Naive thymus-derived CD4-positive, alpha-beta T cell (primary cell): ENCODE measurements at regions of chr15 and their contacts with region 1.

Region 1: GRCh38 chr15:44663409-44664308 is at the start of gene SPG11:
- DNase-seq: peak; percentile 81 to 95 (median 94)
- ATAC-seq: peak; percentile 91
- H3K4me3 ChIP-seq: peak within 1 kb of the TSS; percentile 85
- H3K4me3 Mint-ChIP-seq: peak within 1 kb of the TSS; percentile 84 to 99 (median 98)
- H3K27ac ChIP-seq: peak within 1 kb of the TSS; percentile 91
- H3K27ac Mint-ChIP-seq: peak within 1 kb of the TSS; percentile 94 to 99 (median 96)
- H3K4me1 ChIP-seq: peaks cover 35 to 53% of the 10 kb centered on the region in 2 donors
- H3K4me1 Mint-ChIP-seq: peaks cover 41 to 77% (median 69%) of the 10 kb centered on the region in 7 donors
- H3K27me3 ChIP-seq: no peaks in the 10 kb centered on the region
- H3K27me3 Mint-ChIP-seq: no peaks in the 10 kb centered on the region
- total RNA-seq, gene SPG11: 92.2 to 137 (median 131) TPM

Region 2: DNA sequence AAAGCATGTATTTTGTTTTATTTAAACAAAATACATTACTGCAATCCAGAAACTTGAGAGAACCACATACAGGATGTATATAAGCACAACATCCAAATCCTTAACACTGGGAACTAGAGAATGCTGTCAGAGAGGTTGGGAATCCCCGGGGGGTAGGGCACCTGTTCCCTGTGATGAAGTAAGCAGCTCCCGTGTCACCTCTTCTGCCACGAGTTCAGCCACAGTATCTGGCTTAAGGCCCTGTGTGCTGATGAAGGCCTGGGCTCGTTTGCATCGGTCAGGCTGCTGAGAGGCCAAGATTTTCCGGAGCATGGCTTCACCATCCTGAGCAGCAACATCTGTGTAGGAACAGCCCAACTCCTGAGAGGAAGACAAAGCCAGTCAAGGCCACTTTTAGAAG is 90.3 kb before region 1 on chr15:
- CTCF ChIA-PET with region 1: interaction called, 5 read pairs
- POLR2A ChIA-PET with region 1: interaction called, 3 read pairs
- intact Hi-C with region 1: loop called (anchors 1 to 2 kb)
- DNase-seq: no peak
- ATAC-seq: no peak
- H3K4me3 ChIP-seq: no peak overlapping the region
- H3K4me3 Mint-ChIP-seq: no peak overlapping the region
- H3K27ac ChIP-seq: peak overlapping the region; percentile 29
- H3K27ac Mint-ChIP-seq: peak overlapping the region in 4 of 9 donors; percentile 14 to 62 (median 33)
- H3K4me1 ChIP-seq: peaks cover 0 to 2% of the 10 kb centered on the region in 2 donors
- H3K4me1 Mint-ChIP-seq: peaks cover 4 to 11% (median 9%) of the 10 kb centered on the region in 7 donors
- H3K27me3 ChIP-seq: no peaks in the 10 kb centered on the region
- H3K27me3 Mint-ChIP-seq: no peaks in the 10 kb centered on the region

Region 3: DNA sequence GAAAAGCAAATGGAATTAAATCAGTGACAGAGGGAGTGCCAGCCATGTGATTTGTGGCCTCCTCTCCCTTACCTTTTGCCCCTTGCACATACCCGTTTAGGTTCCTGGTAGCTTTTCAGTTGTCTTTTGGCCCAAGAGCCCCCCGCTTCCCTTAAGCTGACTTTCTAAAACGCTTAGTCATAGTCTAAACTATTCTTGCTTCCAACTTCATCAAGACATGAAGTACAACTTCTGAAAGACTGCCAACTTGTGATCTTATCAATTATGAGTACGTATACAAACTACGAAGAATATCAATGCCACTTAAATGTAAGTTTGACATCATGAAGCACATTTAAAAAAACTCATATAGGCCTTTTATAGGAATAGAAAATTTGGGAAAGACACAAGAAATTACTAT is 64.8 kb before region 1 on chr15:
- CTCF ChIA-PET with region 1: no interaction called
- POLR2A ChIA-PET with region 1: interaction called, 10 read pairs
- intact Hi-C with region 1: loop called in 1 of 2 experiments (anchors 2 kb)
- DNase-seq: no peak
- ATAC-seq: no peak
- H3K4me3 ChIP-seq: no peak overlapping the region
- H3K4me3 Mint-ChIP-seq: no peak overlapping the region
- H3K27ac ChIP-seq: peak overlapping the region; percentile 13
- H3K27ac Mint-ChIP-seq: peak overlapping the region in 8 of 9 donors; percentile 6 to 82 (median 58)
- H3K4me1 ChIP-seq: peaks cover 0 to 9% of the 10 kb centered on the region in 2 donors
- H3K4me1 Mint-ChIP-seq: peaks cover 7 to 27% (median 16%) of the 10 kb centered on the region in 7 donors
- H3K27me3 ChIP-seq: no peaks in the 10 kb centered on the region
- H3K27me3 Mint-ChIP-seq: no peaks in the 10 kb centered on the region

Region 4: DNA sequence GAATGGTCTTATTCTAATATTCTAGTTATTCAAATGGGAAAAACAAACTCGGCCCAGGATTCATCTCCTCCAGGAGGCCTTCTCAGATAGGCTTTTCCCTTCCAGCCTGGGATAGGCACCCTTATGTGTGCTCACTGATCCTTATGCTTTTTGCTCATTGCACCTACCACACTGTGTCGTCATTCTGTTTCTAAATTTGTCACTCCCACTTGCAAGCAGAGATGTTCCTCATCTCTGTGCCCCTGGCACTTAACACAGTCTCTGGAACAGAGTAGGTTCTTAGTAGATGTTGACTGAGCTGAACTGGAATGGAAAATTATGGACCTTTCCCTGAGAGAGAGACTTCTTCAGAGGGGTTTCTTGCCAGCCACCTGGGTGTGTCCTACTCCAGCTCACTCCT is 18.6 kb after region 1 on chr15:
- CTCF ChIA-PET with region 1: interaction called, 69 read pairs
- POLR2A ChIA-PET with region 1: interaction called, 786 read pairs
- intact Hi-C with region 1: loop called (anchors 1 kb)
- DNase-seq: no peak
- ATAC-seq: no peak
- H3K4me3 ChIP-seq: peak overlapping the region; percentile 5
- H3K4me3 Mint-ChIP-seq: peak overlapping the region; percentile 64 to 84 (median 74)
- H3K27ac ChIP-seq: peak overlapping the region; percentile 69
- H3K27ac Mint-ChIP-seq: peak overlapping the region; percentile 88 to 99 (median 94)
- H3K4me1 ChIP-seq: peaks cover 65 to 72% of the 10 kb centered on the region in 2 donors
- H3K4me1 Mint-ChIP-seq: peaks cover 56 to 98% (median 86%) of the 10 kb centered on the region in 7 donors
- H3K27me3 ChIP-seq: no peaks in the 10 kb centered on the region
- H3K27me3 Mint-ChIP-seq: no peaks in the 10 kb centered on the region

Region 5: DNA sequence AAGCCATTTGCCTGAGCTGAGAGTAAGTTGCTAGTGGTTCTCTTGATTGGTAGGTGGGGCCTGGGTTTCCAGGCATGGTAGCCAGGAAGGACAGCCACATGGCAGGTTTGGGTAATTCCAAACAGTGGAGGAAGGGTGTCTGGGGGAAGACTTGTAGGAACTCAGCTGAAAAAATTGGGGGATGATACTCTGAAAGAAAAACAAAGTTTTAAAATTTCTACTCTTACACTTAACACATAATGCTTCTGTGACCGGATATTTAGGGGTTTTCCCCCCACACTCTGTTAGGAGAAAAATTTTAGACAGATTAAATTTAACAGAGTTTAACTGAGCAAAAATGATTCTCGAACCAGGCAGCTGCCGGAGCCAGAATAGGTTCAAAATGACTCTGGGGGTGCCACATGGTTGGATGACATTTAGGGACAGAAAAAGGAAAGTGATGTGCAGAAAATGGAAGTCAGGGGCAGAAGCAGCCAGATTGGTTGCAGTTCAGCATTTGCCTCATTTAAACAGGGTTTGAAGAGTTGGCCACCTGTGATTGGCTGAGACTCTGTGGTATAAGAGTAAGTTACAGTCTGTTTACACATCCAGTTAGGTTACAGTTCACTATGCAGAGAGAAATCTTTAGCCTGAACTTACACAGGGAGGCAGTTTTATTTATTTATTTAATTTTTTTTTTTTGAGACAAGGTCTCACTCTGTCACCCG is 55.8 kb after region 1 on chr15:
- CTCF ChIA-PET with region 1: interaction called, 235 read pairs
- POLR2A ChIA-PET with region 1: interaction called, 3,822 read pairs
- intact Hi-C with region 1: no loop called
- DNase-seq: peak in 8 of 9 donors; percentile 57 to 79 (median 70)
- ATAC-seq: peak; percentile 75
- H3K4me3 ChIP-seq: no peak overlapping the region
- H3K4me3 Mint-ChIP-seq: peak overlapping the region; percentile 39 to 97 (median 72)
- H3K27ac ChIP-seq: peak overlapping the region; percentile 77
- H3K27ac Mint-ChIP-seq: peak overlapping the region; percentile 89 to 100 (median 95)
- H3K4me1 ChIP-seq: peaks cover 78 to 86% of the 10 kb centered on the region in 2 donors
- H3K4me1 Mint-ChIP-seq: peaks cover 64 to 95% (median 88%) of the 10 kb centered on the region in 7 donors
- H3K27me3 ChIP-seq: no peaks in the 10 kb centered on the region
- H3K27me3 Mint-ChIP-seq: no peaks in the 10 kb centered on the region

Region 6: GRCh38 chr15:44782516-44782915 is 118.9 kb after region 1 on chr15:
- CTCF ChIA-PET with region 1: no interaction called
- POLR2A ChIA-PET with region 1: interaction called, 15 read pairs
- intact Hi-C with region 1: no loop called
- DNase-seq: no peak
- ATAC-seq: no peak
- H3K4me3 ChIP-seq: no peak overlapping the region
- H3K4me3 Mint-ChIP-seq: no peak overlapping the region
- H3K27ac ChIP-seq: no peak overlapping the region
- H3K27ac Mint-ChIP-seq: peak overlapping the region in 1 of 9 donors; percentile 51
- H3K4me1 ChIP-seq: peaks cover 6 to 7% of the 10 kb centered on the region in 2 donors
- H3K4me1 Mint-ChIP-seq: peaks cover 5 to 13% (median 9%) of the 10 kb centered on the region in 7 donors
- H3K27me3 ChIP-seq: no peaks in the 10 kb centered on the region
- H3K27me3 Mint-ChIP-seq: peaks cover 0 to 2% (median 0%) of the 10 kb centered on the region in 5 donors

Region 7: DNA sequence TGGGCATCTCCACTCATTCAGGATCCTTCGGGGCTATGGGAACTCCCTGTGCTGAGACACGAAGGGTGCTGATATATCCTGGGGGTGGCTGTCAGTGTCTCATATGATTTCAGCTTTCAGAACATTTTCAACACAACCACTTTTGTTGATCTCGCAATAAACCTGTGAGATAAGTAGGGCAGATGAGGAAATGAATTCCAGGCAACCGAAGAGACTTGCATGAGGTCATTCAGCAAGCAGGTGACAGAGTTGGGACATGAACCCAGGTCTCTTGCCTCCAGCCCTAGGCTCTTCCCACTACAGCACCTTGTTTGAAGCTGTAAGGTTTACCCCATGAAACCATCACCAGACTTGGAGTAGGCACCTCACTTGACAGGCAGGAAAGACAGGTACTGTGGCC is 482.7 kb after region 1 on chr15:
- CTCF ChIA-PET with region 1: no interaction called
- POLR2A ChIA-PET with region 1: no interaction called
- intact Hi-C with region 1: no loop called
- DNase-seq: no peak
- ATAC-seq: no peak
- H3K4me3 ChIP-seq: no peak overlapping the region
- H3K4me3 Mint-ChIP-seq: no peak overlapping the region
- H3K27ac ChIP-seq: no peak overlapping the region
- H3K27ac Mint-ChIP-seq: no peak overlapping the region
- H3K4me1 ChIP-seq: no peaks in the 10 kb centered on the region
- H3K4me1 Mint-ChIP-seq: peaks cover 0 to 4% (median 0%) of the 10 kb centered on the region in 7 donors
- H3K27me3 ChIP-seq: no peaks in the 10 kb centered on the region
- H3K27me3 Mint-ChIP-seq: peaks cover 0 to 3% (median 0%) of the 10 kb centered on the region in 5 donors